CD8-positive, alpha-beta T cell (primary cell): ENCODE measurements at regions of chr11 and their contacts with region 1.

Region 1: GRCh38 chr11:22106566-22106965 is 86.3 kb upstream of the ANO5 start:
- DNase-seq: no peak
- ATAC-seq: no peak
- H3K4me3 ChIP-seq: no peak overlapping the region
- H3K4me3 Mint-ChIP-seq: no peak overlapping the region
- H3K27ac ChIP-seq: no peak overlapping the region
- H3K27ac Mint-ChIP-seq: no peak overlapping the region
- H3K4me1 ChIP-seq: no peaks in the 10 kb centered on the region
- H3K4me1 Mint-ChIP-seq: no peaks in the 10 kb centered on the region
- H3K27me3 ChIP-seq: no peaks in the 10 kb centered on the region
- H3K27me3 Mint-ChIP-seq: no peaks in the 10 kb centered on the region
- CTCF ChIP-seq: no peak

Region 2: DNA sequence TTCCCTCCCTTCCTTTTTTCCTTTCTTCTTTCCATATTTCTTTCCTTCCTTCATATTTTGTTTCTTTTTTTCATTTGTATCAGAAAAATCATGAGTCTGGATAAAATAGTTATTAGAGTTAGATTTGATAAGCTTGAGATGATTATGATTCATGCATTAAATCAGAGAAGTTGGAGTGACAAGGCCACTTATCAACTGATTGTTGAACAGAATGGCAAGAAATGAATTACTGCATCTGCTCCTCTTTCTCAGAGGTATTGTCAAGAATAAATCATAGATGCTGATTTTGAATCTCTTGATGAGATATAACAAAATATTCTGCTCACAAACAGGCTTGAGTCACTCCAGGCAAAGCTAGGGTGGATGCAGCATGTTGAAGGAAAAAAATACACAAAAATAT is 31.7 kb after region 1 on chr11:
- CTCF ChIA-PET with region 1: no interaction called
- POLR2A ChIA-PET with region 1: no interaction called
- intact Hi-C with region 1: loop called in 1 of 2 experiments (anchors 1 kb)
- DNase-seq: no peak
- ATAC-seq: no peak
- H3K4me3 ChIP-seq: no peak overlapping the region
- H3K4me3 Mint-ChIP-seq: no peak overlapping the region
- H3K27ac ChIP-seq: no peak overlapping the region
- H3K27ac Mint-ChIP-seq: no peak overlapping the region
- H3K4me1 ChIP-seq: no peaks in the 10 kb centered on the region
- H3K4me1 Mint-ChIP-seq: no peaks in the 10 kb centered on the region
- H3K27me3 ChIP-seq: no peaks in the 10 kb centered on the region
- H3K27me3 Mint-ChIP-seq: no peaks in the 10 kb centered on the region
- CTCF ChIP-seq: no peak